Colonic mucosa (tissue), 4 donors: ENCODE measurements at regions of chr9 and their contacts with region 1.

Region 1: DNA sequence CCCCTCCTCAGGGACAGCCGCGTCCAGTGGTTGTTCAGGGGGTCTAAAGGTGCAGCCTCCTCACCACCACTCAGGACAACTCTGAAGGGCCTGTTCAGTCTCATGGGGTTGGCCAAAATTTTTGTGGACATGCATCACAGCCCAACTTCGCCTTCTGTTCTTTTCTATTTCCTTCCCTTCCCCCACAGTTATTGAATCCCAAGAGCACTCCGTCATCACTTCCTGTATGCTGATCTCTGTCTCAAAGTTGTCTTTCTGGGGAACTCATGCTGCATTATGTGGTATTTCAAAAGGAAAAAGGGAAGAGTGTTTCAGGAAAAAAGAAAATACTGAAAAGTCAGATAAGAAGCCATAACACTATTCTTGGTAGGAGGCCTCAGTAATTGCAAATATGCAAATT is 355.4 kb downstream of the CAAP1 start:
- DNase-seq: no peak
- H3K4me3 ChIP-seq: no peak overlapping the region
- H3K27ac ChIP-seq: no peak overlapping the region
- H3K4me1 ChIP-seq: no peaks in the 10 kb centered on the region
- H3K27me3 ChIP-seq: no peaks in the 10 kb centered on the region
- CTCF ChIP-seq: no peak

Region 2: GRCh38 chr9:26471261-26471660 is 66.0 kb before region 1 on chr9:
- intact Hi-C with region 1: loop called (anchors 10 kb)
- DNase-seq: no peak
- H3K4me3 ChIP-seq: no peak overlapping the region
- H3K27ac ChIP-seq: no peak overlapping the region
- H3K4me1 ChIP-seq: no peaks in the 10 kb centered on the region
- H3K27me3 ChIP-seq: no peaks in the 10 kb centered on the region
- CTCF ChIP-seq: no peak

Region 3: GRCh38 chr9:26677965-26678706 is 140.9 kb after region 1 on chr9:
- intact Hi-C with region 1: no loop called
- DNase-seq: no peak
- H3K4me3 ChIP-seq: no peak overlapping the region
- H3K27ac ChIP-seq: no peak overlapping the region
- H3K4me1 ChIP-seq: no peaks in the 10 kb centered on the region
- H3K27me3 ChIP-seq: no peaks in the 10 kb centered on the region
- CTCF ChIP-seq: no peak